ENCODE measurements at regions of chr18 and their contacts with region 1.

Region 1: DNA sequence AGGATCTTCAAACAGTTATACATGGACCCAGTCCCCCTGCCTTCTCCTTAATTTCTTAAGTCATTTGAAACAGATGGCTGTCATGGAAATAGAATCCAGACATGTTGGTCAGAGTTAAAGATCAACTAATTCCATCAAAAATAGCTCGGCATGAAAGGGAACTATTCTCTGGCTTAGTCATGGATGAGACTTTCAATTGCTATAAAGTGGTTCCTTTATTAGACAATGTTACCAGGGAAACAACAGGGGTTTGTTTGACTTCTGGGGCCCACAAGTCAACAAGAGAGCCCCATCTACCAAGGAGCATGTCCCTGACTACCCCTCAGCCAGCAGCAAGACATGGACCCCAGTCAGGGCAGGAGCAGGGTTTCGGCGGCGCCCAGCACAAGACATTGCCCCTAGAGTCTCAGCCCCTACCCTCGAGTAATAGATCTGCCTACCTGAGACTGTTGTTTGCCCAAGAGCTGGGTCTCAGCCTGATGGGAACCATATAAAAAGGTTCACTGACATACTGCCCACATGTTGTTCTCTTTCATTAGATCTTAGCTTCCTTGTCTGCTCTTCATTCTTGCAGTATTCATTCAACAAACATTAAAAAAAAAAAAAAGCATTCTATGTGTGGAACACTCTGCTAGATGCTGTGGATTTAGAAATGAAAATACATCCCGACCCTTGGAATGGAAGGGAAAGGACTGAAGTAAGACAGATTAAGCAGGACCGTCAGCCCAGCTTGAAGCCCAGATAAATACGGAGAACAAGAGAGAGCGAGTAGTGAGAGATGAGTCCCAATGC is 4.6 kb downstream of the TTR start:
- DNase-seq: peak; percentile 67
- ATAC-seq: peak; percentile 28
- H3K4me3 ChIP-seq: no peak overlapping the region; a peak in 1 of 6 replicates
- H3K27ac ChIP-seq: peak overlapping the region; percentile 57
- H3K4me1 ChIP-seq: peaks cover 59% of the 10 kb centered on the region
- H3K27me3 ChIP-seq: no peaks in the 10 kb centered on the region
- CTCF ChIP-seq: no peak
- EP300 ChIP-seq: peak in 1 of 2 experiments; percentile 50; a peak in 2 of 4 replicates
- POLR2A ChIP-seq: peak in 1 of 2 experiments; percentile 15; a peak in 1 of 4 replicates
- RAD21 ChIP-seq: no peak

Region 2: DNA sequence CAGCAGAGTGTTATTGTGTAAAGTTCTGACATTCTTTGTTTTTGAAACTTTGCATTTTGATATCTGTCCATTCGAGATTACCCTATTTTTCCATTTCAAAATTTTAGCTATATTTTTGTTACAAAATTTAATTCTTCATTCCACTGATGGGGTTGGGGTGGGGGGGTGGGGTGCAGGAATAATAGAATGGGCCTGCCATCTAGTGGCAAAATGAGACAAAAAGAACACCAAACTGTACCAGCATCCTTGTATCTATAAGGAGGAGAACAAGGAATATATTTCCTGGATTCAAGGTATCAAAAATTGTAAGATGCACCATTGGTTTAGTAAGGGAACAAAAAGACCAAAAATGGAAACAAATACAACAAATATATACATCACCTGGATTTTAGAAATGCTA is 32.5 kb before region 1 on chr18:
- CTCF ChIA-PET with region 1: no interaction called
- POLR2A ChIA-PET with region 1: interaction called, 19 read pairs
- in situ Hi-C with region 1: no loop called
- intact Hi-C with region 1: loop called (anchors 5 kb)
- DNase-seq: no peak
- ATAC-seq: no peak
- H3K4me3 ChIP-seq: no peak overlapping the region
- H3K27ac ChIP-seq: no peak overlapping the region
- H3K4me1 ChIP-seq: peaks cover 55% of the 10 kb centered on the region
- H3K27me3 ChIP-seq: no peaks in the 10 kb centered on the region
- CTCF ChIP-seq: no peak
- EP300 ChIP-seq: no peak
- POLR2A ChIP-seq: no peak
- RAD21 ChIP-seq: no peak

Region 3: DNA sequence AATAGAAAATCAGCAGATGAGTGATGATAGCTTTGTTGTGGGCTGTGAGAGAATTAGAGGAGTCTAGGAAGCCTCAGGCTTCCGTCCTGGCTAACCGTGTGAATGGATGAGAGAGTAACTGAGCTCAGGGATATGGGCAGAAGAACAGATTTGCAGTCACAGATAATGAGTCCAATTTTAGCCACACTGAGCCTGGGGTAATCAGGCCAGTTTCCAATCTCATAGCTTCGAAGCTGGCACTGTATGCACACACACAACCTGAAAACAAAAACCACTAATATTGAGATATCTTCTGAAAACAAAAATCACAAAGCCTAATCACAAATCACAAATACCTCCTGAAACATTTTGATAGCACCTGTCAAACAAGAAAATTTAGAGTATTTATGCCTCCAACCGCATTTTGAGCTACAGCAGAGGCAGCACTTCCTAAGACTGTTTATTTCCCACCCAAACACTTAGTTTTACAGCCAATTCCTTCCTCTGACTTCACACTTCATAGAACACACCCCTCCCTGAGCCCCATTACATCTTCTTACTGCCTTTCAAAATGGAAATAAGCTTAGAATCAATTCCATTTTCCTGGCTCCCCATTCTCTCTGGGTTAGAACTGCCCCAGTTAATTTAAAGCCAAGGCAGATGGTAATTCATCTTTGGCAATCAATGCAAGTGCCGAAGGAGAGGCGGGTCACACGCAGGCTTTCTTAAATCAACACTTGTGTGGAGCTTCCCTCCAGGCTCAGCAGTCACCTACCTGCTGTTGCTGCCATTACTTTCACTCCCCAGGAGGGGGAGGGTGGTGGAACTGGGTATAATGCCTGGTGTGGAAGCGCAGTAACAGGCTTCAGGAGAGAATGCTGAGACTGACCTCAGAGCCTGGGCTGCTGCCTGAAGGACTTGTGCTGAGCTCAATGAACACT is 14.3 kb after region 1 on chr18:
- CTCF ChIA-PET with region 1: no interaction called
- POLR2A ChIA-PET with region 1: interaction called, 10 read pairs
- in situ Hi-C with region 1: no loop called
- intact Hi-C with region 1: loop called (anchors 2 kb)
- DNase-seq: peak; percentile 61
- ATAC-seq: peak; percentile 92
- H3K4me3 ChIP-seq: no peak overlapping the region
- H3K27ac ChIP-seq: no peak overlapping the region
- H3K4me1 ChIP-seq: peaks cover 81% of the 10 kb centered on the region
- H3K27me3 ChIP-seq: no peaks in the 10 kb centered on the region
- CTCF ChIP-seq: peak; percentile 50
- EP300 ChIP-seq: no peak
- POLR2A ChIP-seq: no peak
- RAD21 ChIP-seq: peak; percentile 19; the same call in 1 of the 2 replicates

Region 4: DNA sequence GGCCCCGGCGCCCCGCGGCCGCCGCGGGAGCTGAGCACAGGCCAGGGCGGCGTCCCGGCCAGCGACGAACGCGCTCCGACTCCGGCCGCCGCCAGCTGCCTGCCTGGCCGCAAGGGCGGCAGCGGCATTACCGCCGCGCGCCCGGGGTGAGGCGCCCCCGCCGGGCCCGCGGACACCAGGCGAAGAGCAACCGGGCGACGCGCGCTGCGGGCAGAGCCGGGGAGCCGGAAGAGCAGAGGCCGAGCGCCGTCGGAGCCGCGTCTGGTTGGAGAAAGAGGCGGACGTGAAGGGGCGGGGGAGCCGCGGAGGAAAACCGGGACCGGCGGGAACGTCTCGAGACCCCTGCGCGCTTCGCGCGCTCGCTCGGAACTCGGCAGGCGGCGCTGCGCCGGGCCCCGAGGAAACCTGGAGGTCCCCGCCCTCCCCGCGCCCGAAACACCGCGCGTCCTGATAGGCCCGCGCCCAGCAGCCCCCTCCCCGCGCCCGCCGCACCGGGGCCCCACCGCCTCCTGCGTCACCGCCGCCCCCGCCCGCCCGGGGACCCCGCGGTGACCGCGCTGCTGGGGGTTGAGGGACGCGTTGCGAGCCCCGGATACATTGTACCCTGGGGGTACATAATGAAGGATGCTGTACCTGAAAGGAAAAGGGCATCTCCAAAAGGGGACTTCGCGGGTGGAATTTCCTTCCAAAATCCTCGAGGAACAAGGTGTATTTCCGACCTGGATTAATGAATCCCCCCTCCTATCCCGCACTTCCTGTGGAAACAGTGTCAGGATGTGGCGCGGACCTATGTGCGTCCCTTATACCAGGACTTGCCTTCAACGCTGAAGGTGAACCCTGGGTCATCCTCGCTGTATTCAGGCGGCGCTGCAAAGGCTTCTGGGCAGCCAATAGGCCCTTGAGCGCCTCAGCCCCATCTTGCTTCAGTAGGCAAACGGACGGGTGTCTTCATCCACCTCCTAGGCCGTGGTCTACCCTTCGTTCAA is 89.1 kb after region 1 on chr18:
- CTCF ChIA-PET with region 1: no interaction called
- POLR2A ChIA-PET with region 1: no interaction called
- in situ Hi-C with region 1: no loop called
- intact Hi-C with region 1: loop called (anchors 10 kb)
- DNase-seq: peak; percentile 54
- ATAC-seq: peak; percentile 94
- H3K4me3 ChIP-seq: peak overlapping the region; percentile 48 to 72 (median 64)
- H3K27ac ChIP-seq: peak overlapping the region; percentile 59
- H3K4me1 ChIP-seq: peaks cover 33% of the 10 kb centered on the region
- H3K27me3 ChIP-seq: 0 out of 5 replicates have a peak, but pooled peaks cover 1 to 3% of the 10 kb centered on the region in 2 experiments
- CTCF ChIP-seq: peak; percentile 69
- EP300 ChIP-seq: no peak
- POLR2A ChIP-seq: peak; percentile 50 to 54; a peak in 3 of 4 replicates
- RAD21 ChIP-seq: peak; percentile 69

Measured in HepG2 (cell line).